Naive thymus-derived CD4-positive, alpha-beta T cell (primary cell): ENCODE measurements at regions of chr1 and their contacts with region 1.

Region 1: DNA sequence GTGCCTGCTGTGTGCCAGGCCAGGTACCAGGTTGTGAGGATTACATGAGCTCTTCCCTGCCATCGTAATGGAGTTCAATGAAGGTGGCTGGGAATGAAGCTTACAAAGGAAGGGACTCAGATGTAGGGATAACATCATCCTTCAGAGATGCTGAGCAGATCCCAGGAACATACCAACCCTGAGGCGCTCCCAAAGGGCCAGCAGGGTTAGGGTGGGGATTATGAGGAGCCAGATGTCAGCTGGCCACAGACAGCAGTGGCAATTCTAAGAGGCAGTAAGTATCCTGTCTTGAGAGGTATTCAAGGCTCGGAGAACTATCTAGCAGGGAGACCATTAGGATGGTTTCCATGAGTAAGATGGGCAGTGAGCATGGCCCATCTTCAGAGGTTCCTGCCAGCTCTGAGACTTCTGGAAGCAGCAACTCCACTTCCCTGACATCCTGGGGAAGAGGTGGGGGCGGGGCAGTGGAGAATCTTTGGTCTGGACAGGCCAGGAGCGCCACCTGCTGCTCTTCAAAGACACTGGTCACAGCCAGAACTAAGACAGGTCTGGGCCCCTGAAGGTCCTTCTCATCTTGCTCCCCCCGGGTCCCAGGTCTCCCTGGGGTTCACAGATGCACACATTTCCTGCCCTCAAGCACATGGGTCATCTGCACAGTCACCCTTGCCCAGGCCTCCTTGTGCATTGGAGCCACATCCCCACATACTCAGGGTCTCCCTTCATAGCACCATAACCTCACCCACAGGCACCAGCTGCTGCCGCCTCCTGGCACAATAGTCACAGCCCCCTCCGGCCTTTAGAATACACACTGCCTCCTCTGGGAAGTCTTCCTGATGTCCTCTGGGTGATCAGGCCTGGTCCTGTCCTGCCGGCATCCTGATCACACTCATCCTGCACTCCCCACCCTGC is 2.7 kb upstream of the SDC3 start:
- DNase-seq: peak in 2 of 9 donors; percentile 12 to 54
- ATAC-seq: peak; percentile 60
- H3K4me3 ChIP-seq: no peak overlapping the region
- H3K4me3 Mint-ChIP-seq: no peak overlapping the region
- H3K27ac ChIP-seq: no peak overlapping the region
- H3K27ac Mint-ChIP-seq: peak overlapping the region in 1 of 9 donors; percentile 66
- H3K4me1 ChIP-seq: peaks cover 0 to 6% of the 10 kb centered on the region in 2 donors
- H3K4me1 Mint-ChIP-seq: peaks cover 9 to 18% (median 15%) of the 10 kb centered on the region in 7 donors
- H3K27me3 ChIP-seq: peaks cover 0 to 4% of the 10 kb centered on the region in 2 donors
- H3K27me3 Mint-ChIP-seq: peaks cover 17 to 38% (median 19%) of the 10 kb centered on the region in 5 donors

Region 2: DNA sequence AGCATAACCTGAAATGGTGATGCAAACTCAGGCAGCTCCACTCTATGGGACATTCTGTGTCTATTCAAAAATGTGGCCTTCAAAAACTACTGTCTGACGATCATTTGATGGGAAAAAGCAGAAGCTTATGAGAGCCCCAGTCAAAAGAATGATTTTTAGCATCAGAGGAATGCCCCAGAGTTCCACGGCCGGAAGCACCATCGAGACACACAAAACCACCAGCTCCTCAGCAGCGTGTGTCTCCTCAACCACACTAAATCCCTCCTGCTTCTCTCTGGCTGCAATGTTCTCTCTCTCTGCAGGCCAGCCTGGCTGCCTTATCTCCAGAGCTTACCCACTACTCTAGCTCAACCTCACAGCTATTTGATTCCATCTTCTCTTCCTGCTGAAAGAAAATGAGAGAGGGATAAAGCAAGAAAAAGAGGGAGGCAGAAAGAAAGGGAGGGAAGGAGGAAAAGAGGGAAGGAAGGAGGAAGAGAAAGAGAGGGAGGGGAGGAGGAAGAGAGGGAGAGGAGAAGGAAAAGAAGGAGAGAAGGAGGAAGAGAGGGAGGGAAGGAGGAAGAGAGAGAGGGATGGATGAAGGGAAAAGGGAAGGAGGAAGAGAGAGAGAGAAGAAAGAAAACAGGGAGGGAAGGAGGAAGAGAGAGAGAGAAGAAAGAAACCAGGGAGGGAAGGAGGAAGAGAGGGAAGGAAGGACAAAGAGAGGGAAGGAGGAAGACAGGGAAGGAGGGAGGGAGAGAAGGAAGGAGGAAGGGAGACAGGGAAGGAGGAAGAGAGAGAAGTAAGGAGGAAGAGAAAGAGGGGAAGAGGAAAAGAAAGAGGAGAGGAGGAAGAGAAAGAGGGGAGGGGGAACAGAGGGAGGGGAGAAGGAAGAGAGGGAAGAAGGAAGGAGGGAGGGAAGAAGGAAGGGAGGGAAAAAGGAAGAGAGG is 120.2 kb before region 1 on chr1:
- CTCF ChIA-PET with region 1: no interaction called
- POLR2A ChIA-PET with region 1: no interaction called
- intact Hi-C with region 1: no loop called
- DNase-seq: peak in 4 of 9 donors; percentile 11 to 29 (median 18)
- ATAC-seq: peak; percentile 66
- H3K4me3 ChIP-seq: no peak overlapping the region
- H3K4me3 Mint-ChIP-seq: peak overlapping the region in 1 of 10 donors; percentile 11
- H3K27ac ChIP-seq: no peak overlapping the region
- H3K27ac Mint-ChIP-seq: peak overlapping the region in 1 of 9 donors; percentile 46
- H3K4me1 ChIP-seq: peaks cover 7 to 10% of the 10 kb centered on the region in 2 donors
- H3K4me1 Mint-ChIP-seq: peaks cover 0 to 14% (median 10%) of the 10 kb centered on the region in 7 donors
- H3K27me3 ChIP-seq: no peaks in the 10 kb centered on the region
- H3K27me3 Mint-ChIP-seq: peaks cover 0 to 25% (median 10%) of the 10 kb centered on the region in 5 donors

Region 3: GRCh38 chr1:31394628-31395193 is 483.4 kb after region 1 on chr1:
- CTCF ChIA-PET with region 1: no interaction called
- POLR2A ChIA-PET with region 1: no interaction called
- intact Hi-C with region 1: no loop called
- DNase-seq: peak; percentile 48 to 83 (median 65)
- ATAC-seq: peak; percentile 96
- H3K4me3 ChIP-seq: peak overlapping the region; percentile 75
- H3K4me3 Mint-ChIP-seq: peak overlapping the region; percentile 84 to 90 (median 88)
- H3K27ac ChIP-seq: no peak overlapping the region
- H3K27ac Mint-ChIP-seq: peak overlapping the region in 4 of 9 donors; percentile 18 to 75 (median 52)
- H3K4me1 ChIP-seq: peaks cover 0 to 4% of the 10 kb centered on the region in 2 donors
- H3K4me1 Mint-ChIP-seq: peaks cover 0 to 14% (median 12%) of the 10 kb centered on the region in 7 donors
- H3K27me3 ChIP-seq: no peaks in the 10 kb centered on the region
- H3K27me3 Mint-ChIP-seq: peaks cover 0 to 8% (median 0%) of the 10 kb centered on the region in 5 donors

Region 4: GRCh38 chr1:31405578-31406245 is 494.4 kb after region 1 on chr1:
- CTCF ChIA-PET with region 1: no interaction called
- POLR2A ChIA-PET with region 1: no interaction called
- intact Hi-C with region 1: loop called in 1 of 2 experiments (anchors 5 kb)
- DNase-seq: no peak
- ATAC-seq: no peak
- H3K4me3 ChIP-seq: no peak overlapping the region
- H3K4me3 Mint-ChIP-seq: no peak overlapping the region
- H3K27ac ChIP-seq: no peak overlapping the region
- H3K27ac Mint-ChIP-seq: no peak overlapping the region
- H3K4me1 ChIP-seq: no peaks in the 10 kb centered on the region
- H3K4me1 Mint-ChIP-seq: no peaks in the 10 kb centered on the region
- H3K27me3 ChIP-seq: no peaks in the 10 kb centered on the region
- H3K27me3 Mint-ChIP-seq: peaks cover 26 to 35% (median 27%) of the 10 kb centered on the region in 5 donors